ENCODE measurements at regions of chr12 and their contacts with region 1.

Region 1: GRCh38 chr12:130994821-130995375 is 41.2 kb downstream of the ADGRD1 start:
- DNase-seq: no peak
- ATAC-seq: peak in 4 of 8 donors; percentile 16 to 25 (median 22)
- H3K4me3 ChIP-seq: no peak overlapping the region
- H3K27ac ChIP-seq: no peak overlapping the region
- H3K4me1 ChIP-seq: no peaks in the 10 kb centered on the region
- H3K27me3 ChIP-seq: no peaks in the 10 kb centered on the region
- CTCF ChIP-seq: no peak

Region 2: DNA sequence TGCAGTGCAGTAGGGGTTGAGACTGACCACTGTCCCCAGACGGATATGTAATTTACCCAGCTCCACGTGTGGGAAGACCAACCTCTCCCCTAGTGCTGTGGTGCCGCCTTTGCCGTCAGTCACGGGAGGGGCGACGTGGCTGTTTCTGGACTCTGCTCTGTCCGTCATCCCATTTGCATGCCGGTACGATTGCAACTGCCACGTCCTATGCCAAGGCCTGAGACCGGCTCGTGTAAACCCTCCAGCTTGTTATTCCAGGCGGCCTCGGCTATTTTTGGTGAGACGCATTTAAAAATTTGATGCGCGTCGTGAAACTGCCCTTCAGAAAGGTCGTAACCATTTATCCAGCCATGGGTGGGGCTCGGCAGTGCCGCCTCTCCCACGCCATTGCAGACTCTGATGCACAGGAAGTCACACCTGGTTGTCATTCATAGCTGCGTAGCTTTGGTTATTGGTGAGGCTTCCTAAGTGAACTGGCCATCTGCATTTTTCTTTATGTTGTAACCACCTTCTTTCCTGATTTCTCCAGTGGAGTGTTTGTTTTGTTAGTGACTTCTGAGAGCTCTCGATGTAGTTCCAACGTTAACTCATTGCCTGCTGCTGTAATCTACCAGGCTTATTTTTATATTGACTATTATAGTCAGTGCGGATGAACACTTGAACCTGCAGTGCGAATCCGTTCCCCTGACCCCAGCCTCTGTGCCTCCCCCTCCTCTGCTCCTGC is 33.9 kb after region 1 on chr12:
- intact Hi-C with region 1: loop called in 1 of 10 experiments (anchors 1 kb)
- DNase-seq: peak in 1 of 2 donors; percentile 46
- ATAC-seq: peak in 7 of 8 donors; percentile 34 to 84 (median 50)
- H3K4me3 ChIP-seq: no peak overlapping the region
- H3K27ac ChIP-seq: peak overlapping the region in 2 of 10 donors; percentile 51 to 70
- H3K4me1 ChIP-seq: peaks cover 0 to 3% (median 0%) of the 10 kb centered on the region in 9 donors
- H3K27me3 ChIP-seq: no peaks in the 10 kb centered on the region
- CTCF ChIP-seq: no peak

Measured in heart right ventricle (tissue), 16 donors.